Caco-2 (cell line): ENCODE measurements at regions of chr12 and their contacts with region 1.

Region 1: GRCh38 chr12:94649349-94650142 is 811 bp downstream of the TMCC3 start:
- DNase-seq: peak; percentile 36 to 61
- H3K4me3 ChIP-seq: peak overlapping the region; percentile 59
- H3K4me3 Mint-ChIP-seq: peak overlapping the region; percentile 82
- H3K27ac Mint-ChIP-seq: peak overlapping the region; percentile 45
- H3K4me1 ChIP-seq: no peaks in the 10 kb centered on the region
- H3K4me1 Mint-ChIP-seq: no peaks in the 10 kb centered on the region
- H3K27me3 ChIP-seq: peaks cover 2% of the 10 kb centered on the region; the same call in 1 of the 2 replicates
- H3K27me3 Mint-ChIP-seq: peaks cover 11% of the 10 kb centered on the region
- CTCF ChIP-seq: no peak

Region 2: GRCh38 chr12:94560431-94561221 is 88.9 kb before region 1 on chr12:
- CTCF ChIA-PET with region 1: no interaction called
- POLR2A ChIA-PET with region 1: no interaction called
- intact Hi-C with region 1: no loop called
- DNase-seq: no peak
- H3K4me3 ChIP-seq: no peak overlapping the region
- H3K4me3 Mint-ChIP-seq: no peak overlapping the region
- H3K27ac Mint-ChIP-seq: peak overlapping the region; percentile 8
- H3K4me1 ChIP-seq: no peaks in the 10 kb centered on the region
- H3K4me1 Mint-ChIP-seq: peaks cover 6% of the 10 kb centered on the region
- H3K27me3 ChIP-seq: no peaks in the 10 kb centered on the region
- H3K27me3 Mint-ChIP-seq: no peaks in the 10 kb centered on the region
- CTCF ChIP-seq: no peak

Region 3: DNA sequence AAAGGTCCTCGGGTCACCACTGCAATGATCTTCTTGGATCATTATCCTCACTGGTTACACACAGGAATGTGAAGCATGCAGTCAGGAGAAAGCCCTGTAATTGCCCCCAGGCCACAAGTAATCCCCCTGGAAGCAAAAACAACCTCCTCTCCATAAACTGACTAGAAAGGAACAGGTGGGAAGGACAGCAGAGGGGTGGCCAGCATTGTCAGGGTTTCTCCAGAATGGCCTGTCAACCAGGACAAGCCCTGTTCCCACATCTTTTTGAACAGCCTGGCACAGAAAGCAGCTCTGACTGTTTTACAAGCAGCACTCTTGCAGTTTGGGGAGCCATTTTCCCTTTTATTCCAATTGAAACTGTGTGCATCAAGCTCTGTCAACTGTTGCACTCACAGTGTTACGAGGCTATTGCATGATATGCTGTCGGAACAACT is 35.2 kb before region 1 on chr12:
- CTCF ChIA-PET with region 1: no interaction called
- POLR2A ChIA-PET with region 1: no interaction called
- intact Hi-C with region 1: loop called (anchors 5 kb)
- DNase-seq: peak; percentile 79 to 88
- H3K4me3 ChIP-seq: no peak overlapping the region
- H3K4me3 Mint-ChIP-seq: peak overlapping the region; percentile 28
- H3K27ac Mint-ChIP-seq: no peak overlapping the region
- H3K4me1 ChIP-seq: peaks cover 43% of the 10 kb centered on the region
- H3K4me1 Mint-ChIP-seq: peaks cover 8% of the 10 kb centered on the region
- H3K27me3 ChIP-seq: no peaks in the 10 kb centered on the region
- H3K27me3 Mint-ChIP-seq: no peaks in the 10 kb centered on the region
- CTCF ChIP-seq: no peak

Region 4: DNA sequence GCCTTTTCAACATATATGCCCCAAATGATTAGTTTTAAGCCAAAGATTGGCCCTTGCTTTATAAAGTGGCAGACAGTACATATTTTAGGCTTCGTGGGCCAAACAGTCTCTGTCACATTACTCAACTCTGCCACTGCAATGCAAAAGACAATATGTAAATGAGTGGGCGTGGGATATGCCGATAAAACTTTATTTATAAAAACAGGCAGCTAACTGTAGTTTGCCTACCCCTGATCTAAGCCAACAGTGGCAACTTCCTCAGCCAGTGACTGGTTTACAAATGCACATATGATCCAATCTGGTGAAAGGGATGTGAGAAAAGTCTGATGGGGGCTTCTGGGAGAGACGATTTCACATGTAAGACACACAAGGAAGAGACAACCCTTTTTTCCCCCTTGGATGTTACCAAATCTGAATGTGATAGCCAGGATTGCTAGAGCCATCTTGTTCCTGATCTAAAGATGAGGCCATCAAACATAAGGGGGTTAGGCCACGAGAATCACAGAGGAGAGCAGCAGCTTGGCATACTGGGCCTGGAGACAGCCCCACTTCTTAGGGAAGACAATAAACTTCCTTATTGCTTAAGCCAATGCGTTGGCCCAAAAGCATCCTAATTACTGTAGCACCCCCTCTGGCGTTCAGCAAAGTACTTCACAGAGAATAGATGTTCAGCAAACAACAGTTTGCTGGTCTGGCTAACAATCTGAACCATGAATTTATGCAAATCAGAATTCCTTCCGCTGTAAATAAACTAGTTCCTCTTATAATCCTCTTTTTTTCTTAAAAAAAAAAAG is 76.0 kb after region 1 on chr12:
- CTCF ChIA-PET with region 1: no interaction called
- POLR2A ChIA-PET with region 1: no interaction called
- intact Hi-C with region 1: no loop called
- DNase-seq: peak; percentile 38 to 44
- H3K4me3 ChIP-seq: no peak overlapping the region
- H3K4me3 Mint-ChIP-seq: no peak overlapping the region
- H3K27ac Mint-ChIP-seq: no peak overlapping the region
- H3K4me1 ChIP-seq: no peaks in the 10 kb centered on the region
- H3K4me1 Mint-ChIP-seq: no peaks in the 10 kb centered on the region
- H3K27me3 ChIP-seq: no peaks in the 10 kb centered on the region
- H3K27me3 Mint-ChIP-seq: peaks cover 4% of the 10 kb centered on the region
- CTCF ChIP-seq: peak in 1 of 2 experiments; percentile 43

Region 5: GRCh38 chr12:95224202-95225170 is 574.9 kb after region 1 on chr12:
- CTCF ChIA-PET with region 1: no interaction called
- POLR2A ChIA-PET with region 1: no interaction called
- intact Hi-C with region 1: no loop called
- DNase-seq: no peak
- H3K4me3 ChIP-seq: no peak overlapping the region
- H3K4me3 Mint-ChIP-seq: no peak overlapping the region
- H3K27ac Mint-ChIP-seq: no peak overlapping the region
- H3K4me1 ChIP-seq: 0 out of 2 replicates have a peak, but pooled peaks cover 7% of the 10 kb centered on the region
- H3K4me1 Mint-ChIP-seq: peaks cover 9% of the 10 kb centered on the region
- H3K27me3 ChIP-seq: no peaks in the 10 kb centered on the region
- H3K27me3 Mint-ChIP-seq: no peaks in the 10 kb centered on the region
- CTCF ChIP-seq: no peak